ENCODE measurements at regions of chr2 and their contacts with region 1.

Region 1: GRCh38 chr2:217732992-217733391 is 269.8 kb downstream of the TNS1 start:
- DNase-seq: no peak
- ATAC-seq: no peak
- H3K4me3 ChIP-seq: no peak overlapping the region
- H3K27ac ChIP-seq: no peak overlapping the region
- H3K4me1 ChIP-seq: no peaks in the 10 kb centered on the region
- H3K27me3 ChIP-seq: peaks cover 5% of the 10 kb centered on the region
- CTCF ChIP-seq: no peak

Region 2: GRCh38 chr2:217749008-217749407 is 16.0 kb after region 1 on chr2:
- CTCF ChIA-PET with region 1: no interaction called
- POLR2A ChIA-PET with region 1: interaction called, 19 read pairs
- in situ Hi-C with region 1: no loop called
- intact Hi-C with region 1: no loop called
- DNase-seq: no peak
- ATAC-seq: no peak
- H3K4me3 ChIP-seq: no peak overlapping the region
- H3K27ac ChIP-seq: no peak overlapping the region
- H3K4me1 ChIP-seq: no peaks in the 10 kb centered on the region
- H3K27me3 ChIP-seq: peaks cover 2% of the 10 kb centered on the region; the same call in 1 of the 2 replicates
- CTCF ChIP-seq: no peak